ENCODE measurements at regions of chr4 and their contacts with region 1.

Region 1: GRCh38 chr4:159446266-159446976 is 343.5 kb downstream of the RAPGEF2 start:
- DNase-seq: peak; percentile 50
- CTCF ChIP-seq: peak; percentile 67

Region 2: DNA sequence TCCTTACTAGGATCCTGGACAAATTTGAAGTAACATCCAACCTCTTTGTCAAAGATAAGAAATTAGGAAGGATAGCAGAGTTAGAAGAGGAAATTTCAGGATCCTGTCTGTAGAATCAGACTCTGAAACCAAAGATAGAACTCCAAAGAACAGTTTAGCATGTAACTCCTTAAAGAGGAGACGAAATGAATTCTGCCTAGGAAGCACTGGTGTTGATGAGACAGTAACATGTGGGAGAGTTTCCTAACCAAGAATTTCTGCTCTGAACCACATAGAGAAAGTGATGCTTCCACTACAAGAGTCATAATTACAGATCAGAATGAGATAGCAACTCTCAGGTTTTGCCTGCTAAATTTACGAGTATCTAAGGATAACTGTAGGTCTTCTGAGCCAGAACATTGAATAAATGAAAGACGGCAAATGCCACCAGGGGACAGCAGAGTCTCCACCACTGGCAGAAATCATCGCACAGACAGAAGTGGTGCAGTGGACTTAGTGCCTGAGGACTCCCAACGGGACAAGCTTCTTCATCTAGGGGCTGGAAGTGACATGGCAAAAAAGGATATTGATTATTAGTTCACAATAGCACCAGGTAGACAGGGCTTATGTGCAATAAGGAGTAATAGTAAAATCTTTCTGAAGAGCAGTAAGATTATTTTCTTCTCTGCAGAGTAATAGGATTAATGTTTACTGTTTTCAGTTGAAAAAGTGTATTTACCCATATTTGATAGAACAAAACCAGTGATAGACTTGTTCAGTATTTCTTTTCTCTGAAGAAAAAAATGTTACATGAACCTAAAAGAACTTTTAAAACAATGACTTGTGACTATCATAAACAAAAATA is 716.5 kb before region 1 on chr4:
- in situ Hi-C with region 1: loop called (anchors 25 kb)
- DNase-seq: peak; percentile 51
- CTCF ChIP-seq: peak; percentile 70

Region 3: DNA sequence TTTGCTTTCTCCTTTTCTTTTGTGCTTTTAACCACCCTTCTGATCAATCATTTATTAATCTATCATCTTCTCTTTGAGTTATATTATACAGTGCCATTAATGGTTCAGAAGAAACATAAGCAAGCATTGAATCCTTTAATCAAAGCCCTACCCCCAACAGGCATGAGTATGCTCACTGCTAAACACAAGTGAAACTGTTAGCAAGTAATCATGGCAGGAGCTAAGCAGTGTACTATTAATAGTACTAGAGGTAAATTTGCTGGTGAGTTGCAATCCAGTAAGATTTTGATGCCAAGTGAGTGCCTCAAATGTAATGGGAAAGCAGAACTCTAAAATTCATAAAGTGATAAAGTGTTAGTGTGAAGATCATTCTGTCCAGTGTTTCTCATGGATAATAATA is 620.4 kb before region 1 on chr4:
- in situ Hi-C with region 1: loop called (anchors 25 kb)
- DNase-seq: no peak
- CTCF ChIP-seq: no peak

Region 4: DNA sequence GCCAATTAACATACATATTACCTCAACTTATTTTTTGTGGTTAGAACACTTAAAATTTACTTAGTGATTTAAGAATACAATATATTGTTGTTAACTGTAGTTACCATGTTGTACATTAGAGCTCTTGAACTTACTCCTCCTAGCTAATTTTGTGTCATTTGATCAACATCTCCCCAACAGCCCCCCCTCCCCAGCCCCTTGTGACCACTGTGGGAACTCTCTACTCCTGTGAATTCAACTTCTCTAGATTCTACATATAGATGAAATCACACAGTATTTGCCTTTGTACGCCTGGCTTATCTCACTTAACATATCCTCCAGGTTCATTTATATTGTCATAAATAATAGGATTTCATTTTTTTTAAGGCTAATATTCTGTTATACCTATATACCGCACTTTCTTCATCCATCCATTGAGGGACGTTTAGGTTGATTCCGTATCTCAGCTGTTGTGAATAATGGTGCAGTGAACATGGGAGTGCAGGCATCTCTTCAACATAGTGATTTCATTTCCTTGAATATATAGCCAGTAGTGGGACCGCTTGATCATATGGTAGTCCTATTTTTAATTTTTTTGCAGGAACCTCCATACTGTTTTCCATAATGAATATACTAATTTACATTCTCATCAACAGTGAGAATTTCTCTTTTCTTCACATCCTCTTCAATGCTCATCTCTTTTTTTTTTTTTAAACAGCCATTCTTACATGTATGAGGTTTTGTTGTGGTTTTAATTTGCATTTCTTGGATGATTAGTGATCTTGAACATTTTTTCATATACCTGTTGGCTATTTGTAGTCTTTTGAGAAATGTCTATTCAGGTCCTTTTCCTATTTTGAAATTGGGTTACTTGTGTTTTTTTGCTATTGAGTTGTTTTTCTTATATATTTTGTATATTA is 276.8 kb before region 1 on chr4:
- in situ Hi-C with region 1: no loop called
- DNase-seq: no peak
- CTCF ChIP-seq: no peak

Region 5: GRCh38 chr4:159206427-159206871 is 240.0 kb before region 1 on chr4:
- in situ Hi-C with region 1: loop called (anchors 10 kb)
- DNase-seq: peak; percentile 48
- CTCF ChIP-seq: no peak

Measured in GM13976 (cell line).